CD8-positive, alpha-beta memory T cell (primary cell): ENCODE measurements at regions of chr6 and their contacts with region 1.

Region 1: DNA sequence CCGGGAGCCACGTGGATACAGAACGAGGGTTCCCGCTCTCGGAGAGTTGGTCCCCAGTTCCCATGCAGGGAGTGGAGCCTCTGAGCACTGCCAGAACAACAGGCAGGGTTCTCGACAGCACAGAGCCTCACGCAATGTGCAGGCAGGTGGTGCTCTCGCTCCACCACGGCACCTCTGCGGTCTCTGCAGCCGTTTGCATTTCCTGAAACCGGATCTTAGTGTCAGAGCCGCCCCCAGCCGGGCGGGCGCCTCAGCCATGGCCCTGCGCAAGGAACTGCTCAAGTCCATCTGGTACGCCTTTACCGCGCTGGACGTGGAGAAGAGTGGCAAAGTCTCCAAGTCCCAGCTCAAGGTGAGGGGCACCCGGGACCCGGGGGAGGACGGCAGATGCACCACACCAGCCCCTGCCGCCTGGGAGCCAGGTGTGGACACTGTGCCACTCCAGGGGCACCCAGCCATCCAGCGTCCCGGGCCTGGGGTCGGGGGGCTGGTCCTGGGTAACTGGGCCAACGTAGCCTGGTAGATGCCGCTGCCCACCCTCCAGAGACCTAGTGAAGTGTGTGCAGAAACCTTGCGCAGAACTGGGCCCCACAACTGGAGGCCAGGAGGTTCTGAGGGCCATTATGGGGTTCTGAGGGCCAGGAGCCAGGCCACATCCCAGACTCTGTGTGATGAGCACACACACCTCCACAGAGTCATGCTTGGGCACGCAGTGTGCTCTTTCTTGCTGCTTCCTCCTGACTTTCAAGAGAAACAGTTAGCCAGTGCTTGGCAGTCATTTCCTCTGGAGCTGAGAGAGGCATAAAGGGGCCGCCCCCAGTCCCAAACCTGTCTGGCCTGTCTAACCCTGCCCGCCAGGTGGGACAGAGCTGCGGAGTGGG is at the start of gene DEF6:
- DNase-seq: peak; percentile 82 to 92 (median 84)
- H3K4me3 ChIP-seq: peak within 1 kb of the TSS; percentile 93
- H3K4me3 Mint-ChIP-seq: peak within 1 kb of the TSS; percentile 81 to 93 (median 86)
- H3K27ac ChIP-seq: peak within 1 kb of the TSS; percentile 86
- H3K27ac Mint-ChIP-seq: peak within 1 kb of the TSS; percentile 90 to 100 (median 98)
- H3K4me1 ChIP-seq: peaks cover 48% of the 10 kb centered on the region
- H3K4me1 Mint-ChIP-seq: peaks cover 44 to 55% (median 52%) of the 10 kb centered on the region in 3 donors
- H3K27me3 ChIP-seq: no peaks in the 10 kb centered on the region
- H3K27me3 Mint-ChIP-seq: no peaks in the 10 kb centered on the region
- total RNA-seq, gene DEF6: 71.2 to 73.0 TPM

Region 2: GRCh38 chr6:35240840-35241801 is 56.7 kb before region 1 on chr6:
- CTCF ChIA-PET with region 1: no interaction called
- POLR2A ChIA-PET with region 1: no interaction called
- DNase-seq: peak; percentile 49 to 78 (median 54)
- H3K4me3 ChIP-seq: no peak overlapping the region
- H3K4me3 Mint-ChIP-seq: no peak overlapping the region
- H3K27ac ChIP-seq: no peak overlapping the region
- H3K27ac Mint-ChIP-seq: peak overlapping the region in 2 of 8 donors; percentile 78 to 90
- H3K4me1 ChIP-seq: no peaks in the 10 kb centered on the region
- H3K4me1 Mint-ChIP-seq: peaks cover 3 to 5% (median 3%) of the 10 kb centered on the region in 3 donors
- H3K27me3 ChIP-seq: no peaks in the 10 kb centered on the region
- H3K27me3 Mint-ChIP-seq: peaks cover 0 to 2% of the 10 kb centered on the region in 2 donors

Region 3: GRCh38 chr6:35287671-35288396 is 10.0 kb before region 1 on chr6:
- CTCF ChIA-PET with region 1: interaction called, 12 read pairs
- POLR2A ChIA-PET with region 1: no interaction called
- DNase-seq: no peak
- H3K4me3 ChIP-seq: no peak overlapping the region
- H3K4me3 Mint-ChIP-seq: no peak overlapping the region
- H3K27ac ChIP-seq: no peak overlapping the region
- H3K27ac Mint-ChIP-seq: no peak overlapping the region
- H3K4me1 ChIP-seq: no peaks in the 10 kb centered on the region
- H3K4me1 Mint-ChIP-seq: no peaks in the 10 kb centered on the region
- H3K27me3 ChIP-seq: no peaks in the 10 kb centered on the region
- H3K27me3 Mint-ChIP-seq: no peaks in the 10 kb centered on the region

Region 4: DNA sequence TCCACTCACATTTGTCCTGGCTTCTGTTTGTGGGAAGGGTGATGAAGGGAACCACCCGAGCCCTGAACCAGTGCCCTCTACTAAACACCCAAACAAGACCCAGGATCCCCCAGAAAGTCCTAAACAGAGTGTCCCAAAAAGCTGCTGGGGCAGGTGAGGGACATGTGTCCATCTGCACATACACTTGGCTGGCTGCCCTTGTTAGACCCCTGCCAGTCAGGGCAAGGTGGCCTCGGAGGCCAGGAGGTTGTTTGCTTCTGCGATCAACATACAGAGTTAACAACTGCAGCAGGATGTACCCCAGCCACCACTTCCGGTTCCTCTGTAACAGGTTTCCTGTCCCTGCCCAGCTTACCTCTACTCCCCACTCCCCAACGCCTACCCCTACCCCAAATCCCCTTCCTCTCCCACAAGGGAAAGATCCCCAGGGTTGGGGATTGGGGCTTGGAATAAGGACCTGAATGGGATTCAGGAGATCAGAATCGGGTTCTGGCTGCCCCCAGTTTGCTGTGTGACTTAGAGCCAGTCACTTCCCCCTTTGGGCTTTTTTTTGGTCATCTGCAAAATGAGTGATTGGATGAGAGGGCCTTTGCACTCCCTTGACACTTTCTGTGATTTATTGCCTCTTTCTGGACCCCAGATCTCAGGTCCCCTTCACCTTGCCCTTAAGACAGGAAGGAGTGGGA is 13.7 kb after region 1 on chr6:
- CTCF ChIA-PET with region 1: interaction called, 295 read pairs
- POLR2A ChIA-PET with region 1: interaction called, 16 read pairs
- DNase-seq: peak in 4 of 5 donors; percentile 40 to 71 (median 63)
- H3K4me3 ChIP-seq: peak overlapping the region; percentile 56
- H3K4me3 Mint-ChIP-seq: peak overlapping the region; percentile 57 to 93 (median 84)
- H3K27ac ChIP-seq: peak overlapping the region; percentile 69
- H3K27ac Mint-ChIP-seq: peak overlapping the region; percentile 96 to 99 (median 98)
- H3K4me1 ChIP-seq: peaks cover 91% of the 10 kb centered on the region
- H3K4me1 Mint-ChIP-seq: peaks cover 82 to 96% (median 94%) of the 10 kb centered on the region in 3 donors
- H3K27me3 ChIP-seq: no peaks in the 10 kb centered on the region
- H3K27me3 Mint-ChIP-seq: no peaks in the 10 kb centered on the region

Region 5: DNA sequence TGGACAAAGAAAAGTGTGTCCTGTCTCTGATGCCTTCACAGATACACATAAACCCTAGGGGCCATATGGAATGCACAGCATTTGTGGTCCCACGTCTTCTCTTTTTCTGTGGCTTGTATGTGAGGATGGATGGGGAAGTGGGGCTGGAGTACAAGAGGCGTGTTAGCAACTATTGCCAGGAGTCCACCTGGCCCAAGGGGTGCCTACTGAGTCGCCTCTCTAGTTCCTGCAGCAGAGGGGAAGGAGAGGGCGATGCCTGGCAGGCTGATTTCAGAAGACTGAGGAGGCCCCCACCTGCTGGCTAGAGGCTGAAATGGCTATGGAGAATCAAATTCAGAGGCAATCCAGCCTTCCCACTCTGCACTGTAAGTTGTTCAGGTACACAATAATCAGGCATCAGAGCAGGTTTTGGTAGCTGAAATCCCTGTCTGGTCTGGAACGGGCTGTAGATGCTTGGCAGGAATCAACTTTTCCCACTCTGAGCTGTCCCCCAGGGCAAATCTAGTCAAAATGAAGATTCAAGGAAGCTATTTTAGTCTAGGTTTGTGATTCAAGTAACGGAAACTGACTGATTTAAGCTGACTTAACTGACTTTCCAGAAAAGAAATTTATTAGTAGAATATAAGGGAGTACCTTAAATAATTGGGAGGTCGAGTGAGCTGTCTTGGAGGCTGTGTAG is 29.6 kb after region 1 on chr6:
- CTCF ChIA-PET with region 1: interaction called, 295 read pairs
- POLR2A ChIA-PET with region 1: interaction called, 9 read pairs
- DNase-seq: peak; percentile 57 to 84 (median 69)
- H3K4me3 ChIP-seq: no peak overlapping the region
- H3K4me3 Mint-ChIP-seq: peak overlapping the region in 1 of 7 donors; percentile 51
- H3K27ac ChIP-seq: no peak overlapping the region
- H3K27ac Mint-ChIP-seq: peak overlapping the region; percentile 69 to 92 (median 89)
- H3K4me1 ChIP-seq: peaks cover 18% of the 10 kb centered on the region
- H3K4me1 Mint-ChIP-seq: peaks cover 19 to 21% (median 20%) of the 10 kb centered on the region in 3 donors
- H3K27me3 ChIP-seq: no peaks in the 10 kb centered on the region
- H3K27me3 Mint-ChIP-seq: no peaks in the 10 kb centered on the region

Region 6: GRCh38 chr6:35342258-35343091 is 44.6 kb after region 1 on chr6 and contains the start of gene PPARD:
- CTCF ChIA-PET with region 1: interaction called, 31 read pairs
- POLR2A ChIA-PET with region 1: interaction called, 3 read pairs
- DNase-seq: peak; percentile 96 to 98 (median 97)
- H3K4me3 ChIP-seq: peak within 1 kb of the TSS; percentile 90
- H3K4me3 Mint-ChIP-seq: peak within 1 kb of the TSS; percentile 86 to 98 (median 95)
- H3K27ac ChIP-seq: peak within 1 kb of the TSS; percentile 79
- H3K27ac Mint-ChIP-seq: peak within 1 kb of the TSS; percentile 80 to 98 (median 95)
- H3K4me1 ChIP-seq: peaks cover 51% of the 10 kb centered on the region
- H3K4me1 Mint-ChIP-seq: peaks cover 45 to 55% (median 50%) of the 10 kb centered on the region in 3 donors
- H3K27me3 ChIP-seq: no peaks in the 10 kb centered on the region
- H3K27me3 Mint-ChIP-seq: peaks cover 0 to 1% of the 10 kb centered on the region in 2 donors
- total RNA-seq, gene PPARD: 14.8 to 16.2 TPM

Region 7: GRCh38 chr6:35452186-35453090 is 154.6 kb after region 1 on chr6 and contains the start of gene FANCE:
- CTCF ChIA-PET with region 1: interaction called, 142 read pairs
- POLR2A ChIA-PET with region 1: interaction called, 6 read pairs
- DNase-seq: peak; percentile 78 to 94 (median 83)
- H3K4me3 ChIP-seq: peak within 1 kb of the TSS; percentile 69
- H3K4me3 Mint-ChIP-seq: peak within 1 kb of the TSS; percentile 84 to 92 (median 88)
- H3K27ac ChIP-seq: peak within 1 kb of the TSS; percentile 22
- H3K27ac Mint-ChIP-seq: peak within 1 kb of the TSS; percentile 37 to 90 (median 85)
- H3K4me1 ChIP-seq: peaks cover 21% of the 10 kb centered on the region
- H3K4me1 Mint-ChIP-seq: peaks cover 31 to 45% (median 39%) of the 10 kb centered on the region in 3 donors
- H3K27me3 ChIP-seq: no peaks in the 10 kb centered on the region
- H3K27me3 Mint-ChIP-seq: no peaks in the 10 kb centered on the region
- total RNA-seq, gene FANCE: 23.6 to 27.5 TPM

Region 8: DNA sequence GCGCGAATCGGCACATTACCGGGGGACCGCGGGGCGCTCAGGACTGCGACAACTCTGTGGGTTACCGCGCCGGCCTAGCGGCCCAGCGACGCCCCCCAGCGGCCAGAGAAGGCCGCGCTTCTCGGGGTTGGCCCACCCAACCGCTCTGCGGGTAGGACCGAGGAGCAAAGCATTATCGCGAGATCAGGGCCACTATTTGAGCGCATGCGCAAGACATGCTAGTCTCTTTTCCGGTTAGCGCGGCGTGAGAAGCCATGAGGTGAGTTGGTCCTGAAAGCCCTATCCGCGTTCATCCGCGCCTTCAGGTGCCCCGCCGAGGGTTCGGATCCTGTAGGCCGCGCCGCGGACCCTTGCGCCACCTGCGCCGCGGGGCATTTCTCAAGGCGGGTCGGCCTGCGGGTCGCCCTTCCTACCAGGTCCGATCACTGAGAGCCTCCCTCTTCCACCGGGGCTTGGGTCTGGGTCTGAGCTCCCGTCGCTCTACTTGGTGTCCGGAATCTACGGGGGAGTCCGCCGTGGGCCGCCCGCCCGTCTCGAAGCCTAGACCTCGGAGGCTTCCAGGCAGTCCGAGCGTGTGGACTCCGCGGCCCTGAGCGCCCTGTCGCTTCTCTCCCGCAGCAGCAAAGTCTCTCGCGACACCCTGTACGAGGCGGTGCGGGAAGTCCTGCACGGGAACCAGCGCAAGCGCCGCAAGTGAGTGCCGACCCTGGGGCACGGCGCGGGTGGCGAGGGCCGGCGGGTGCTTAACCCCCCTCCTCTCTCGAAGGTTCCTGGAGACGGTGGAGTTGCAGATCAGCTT is 170.5 kb after region 1 on chr6 and contains the start of gene RPL10A:
- CTCF ChIA-PET with region 1: interaction called, 15 read pairs
- POLR2A ChIA-PET with region 1: interaction called, 4 read pairs
- DNase-seq: peak; percentile 91 to 99 (median 95)
- H3K4me3 ChIP-seq: peak within 1 kb of the TSS; percentile 92
- H3K4me3 Mint-ChIP-seq: peak within 1 kb of the TSS; percentile 89 to 99 (median 97)
- H3K27ac ChIP-seq: peak within 1 kb of the TSS; percentile 87
- H3K27ac Mint-ChIP-seq: peak within 1 kb of the TSS; percentile 92 to 99 (median 98)
- H3K4me1 ChIP-seq: peaks cover 39% of the 10 kb centered on the region
- H3K4me1 Mint-ChIP-seq: peaks cover 35 to 43% (median 41%) of the 10 kb centered on the region in 3 donors
- H3K27me3 ChIP-seq: no peaks in the 10 kb centered on the region
- H3K27me3 Mint-ChIP-seq: peaks cover 0 to 5% of the 10 kb centered on the region in 2 donors
- total RNA-seq, gene RPL10A: 1,737 to 1,739 TPM